Testis (tissue), 5 donors: ENCODE measurements at regions of chr17 and their contacts with region 1.

Region 1: GRCh38 chr17:5055543-5055942 is 20.3 kb upstream of the SLC52A1 start:
- DNase-seq: peak; percentile 46
- H3K4me3 ChIP-seq: no peak overlapping the region
- H3K27ac ChIP-seq: no peak overlapping the region
- H3K4me1 ChIP-seq: no peaks in the 10 kb centered on the region
- H3K27me3 ChIP-seq: no peaks in the 10 kb centered on the region
- CTCF ChIP-seq: no peak
- POLR2A ChIP-seq: no peak

Region 2: GRCh38 chr17:4903051-4903818 is 152.3 kb before region 1 on chr17 and contains the start of gene CHRNE:
- intact Hi-C with region 1: no loop called
- DNase-seq: peak; percentile 93
- H3K4me3 ChIP-seq: peak within 1 kb of the TSS; percentile 20 to 42
- H3K27ac ChIP-seq: no peak within 1 kb of the TSS
- H3K4me1 ChIP-seq: peaks cover 8% of the 10 kb centered on the region
- H3K27me3 ChIP-seq: no peaks in the 10 kb centered on the region
- CTCF ChIP-seq: peak; percentile 57 to 82 (median 80)
- POLR2A ChIP-seq: no peak
- total RNA-seq, gene CHRNE: 1.4 to 2.6 TPM

Region 3: GRCh38 chr17:4913994-4914393 is 141.5 kb before region 1 on chr17:
- intact Hi-C with region 1: no loop called
- DNase-seq: peak; percentile 79
- H3K4me3 ChIP-seq: no peak overlapping the region
- H3K27ac ChIP-seq: no peak overlapping the region
- H3K4me1 ChIP-seq: peaks cover 8% of the 10 kb centered on the region
- H3K27me3 ChIP-seq: no peaks in the 10 kb centered on the region
- CTCF ChIP-seq: no peak
- POLR2A ChIP-seq: no peak

Region 4: GRCh38 chr17:4980644-4981216 is 74.8 kb before region 1 on chr17:
- intact Hi-C with region 1: loop called (anchors 5 kb)
- DNase-seq: no peak
- H3K4me3 ChIP-seq: no peak overlapping the region
- H3K27ac ChIP-seq: no peak overlapping the region
- H3K4me1 ChIP-seq: no peaks in the 10 kb centered on the region
- H3K27me3 ChIP-seq: no peaks in the 10 kb centered on the region
- CTCF ChIP-seq: peak; percentile 64 to 84 (median 65)
- POLR2A ChIP-seq: no peak